ENCODE measurements at regions of chr11 and their contacts with region 1.

Region 1: GRCh38 chr11:34653826-34654490 is 33.1 kb downstream of the EHF start:
- DNase-seq: peak; percentile 89 to 100
- H3K4me3 ChIP-seq: peak overlapping the region; percentile 16; the same call in 1 of the 2 replicates
- H3K27ac ChIP-seq: peak overlapping the region; percentile 95
- H3K4me1 ChIP-seq: peaks cover 71% of the 10 kb centered on the region
- H3K27me3 ChIP-seq: no peaks in the 10 kb centered on the region
- CTCF ChIP-seq: peak; percentile 20; the same call in 1 of the 2 replicates

Region 2: GRCh38 chr11:34512840-34513681 is 140.9 kb before region 1 on chr11:
- CTCF ChIA-PET with region 1: no interaction called
- POLR2A ChIA-PET with region 1: no interaction called
- intact Hi-C with region 1: loop called (anchors 1 kb)
- DNase-seq: peak; percentile 58 to 73
- H3K4me3 ChIP-seq: peak overlapping the region; percentile 56
- H3K27ac ChIP-seq: peak overlapping the region; percentile 61
- H3K4me1 ChIP-seq: peaks cover 20% of the 10 kb centered on the region
- H3K27me3 ChIP-seq: no peaks in the 10 kb centered on the region
- CTCF ChIP-seq: peak; percentile 97

Region 3: GRCh38 chr11:34599406-34599901 is 54.5 kb before region 1 on chr11:
- CTCF ChIA-PET with region 1: interaction called, 3 read pairs
- POLR2A ChIA-PET with region 1: no interaction called
- intact Hi-C with region 1: loop called (anchors 1 kb)
- DNase-seq: peak; percentile 66 to 98
- H3K4me3 ChIP-seq: peak overlapping the region; percentile 24; the same call in 1 of the 2 replicates
- H3K27ac ChIP-seq: peak overlapping the region; percentile 91
- H3K4me1 ChIP-seq: peaks cover 45% of the 10 kb centered on the region
- H3K27me3 ChIP-seq: no peaks in the 10 kb centered on the region
- CTCF ChIP-seq: no peak

Region 4: DNA sequence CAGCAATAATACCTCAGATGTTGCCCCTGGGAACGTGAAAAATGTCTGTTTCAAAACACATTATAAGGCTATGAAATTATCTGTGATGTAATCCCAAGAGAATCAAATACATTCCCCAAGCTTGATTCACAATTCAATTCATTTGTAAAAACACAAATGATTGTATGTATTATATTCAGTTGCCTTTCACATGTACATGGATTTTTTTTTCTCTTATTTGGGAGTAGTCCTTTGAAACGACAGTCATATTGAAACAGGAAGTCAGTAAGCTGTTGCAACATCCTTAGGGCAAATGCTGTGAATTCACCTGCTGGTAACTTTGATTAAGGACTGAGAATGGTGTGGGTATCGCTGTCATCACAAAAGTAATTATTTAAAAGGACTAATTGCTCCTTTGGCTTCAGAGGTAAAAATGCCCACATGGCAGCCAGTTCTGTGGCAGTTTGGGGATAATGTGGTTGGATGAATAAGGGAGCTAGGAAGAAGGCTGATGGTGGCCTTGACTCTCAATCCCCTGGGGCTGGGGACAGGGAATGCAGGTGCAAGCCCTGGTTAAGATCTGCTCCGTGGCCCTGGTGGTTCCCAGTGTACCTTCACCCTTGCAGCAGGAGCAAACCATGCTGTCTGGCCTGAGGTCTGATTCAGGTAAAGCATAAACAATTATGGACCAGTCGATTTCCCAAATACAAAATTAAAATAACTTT is 19.8 kb before region 1 on chr11:
- CTCF ChIA-PET with region 1: interaction called, 16 read pairs
- POLR2A ChIA-PET with region 1: no interaction called
- intact Hi-C with region 1: no loop called
- DNase-seq: peak in 1 of 2 experiments; percentile 90
- H3K4me3 ChIP-seq: peak overlapping the region; percentile 45
- H3K27ac ChIP-seq: peak overlapping the region; percentile 91
- H3K4me1 ChIP-seq: peaks cover 100% of the 10 kb centered on the region
- H3K27me3 ChIP-seq: no peaks in the 10 kb centered on the region
- CTCF ChIP-seq: peak; percentile 41; the same call in 1 of the 2 replicates

Region 5: DNA sequence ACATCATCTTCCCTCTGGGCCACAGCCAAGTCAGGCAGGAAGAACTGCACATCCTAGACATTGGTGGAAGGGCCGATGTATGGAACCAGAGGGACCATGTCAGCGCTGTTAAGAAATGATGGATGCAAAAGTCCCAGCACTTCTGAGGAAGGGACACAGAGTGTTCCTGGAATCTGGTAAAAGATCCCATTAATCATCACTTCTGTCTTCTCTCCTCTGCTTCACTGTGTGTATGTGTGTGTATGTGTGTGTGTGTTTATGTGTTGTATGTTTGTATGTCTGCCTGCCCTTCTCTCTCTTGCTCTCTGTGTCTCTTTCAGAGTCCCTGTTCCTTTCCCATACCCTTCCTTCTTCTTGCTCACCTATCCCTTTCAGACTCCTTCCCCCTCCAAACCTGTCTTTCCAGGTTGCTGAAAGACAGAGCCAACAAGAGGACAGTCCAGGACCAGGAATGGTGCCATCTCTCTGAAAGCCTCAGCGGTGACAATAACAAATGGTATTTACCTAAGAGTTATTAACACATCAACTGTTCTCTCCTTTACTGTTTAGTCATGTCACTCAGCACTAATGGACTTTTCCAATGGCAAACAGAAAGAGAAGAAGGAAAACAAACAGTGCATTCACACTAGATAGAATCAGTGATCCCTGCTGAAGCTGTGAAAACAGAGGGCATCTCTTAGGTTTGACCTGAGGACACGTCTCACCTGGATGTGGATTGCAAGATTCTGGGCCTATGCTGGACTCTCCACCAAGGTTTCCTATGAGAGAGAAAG is 14.0 kb after region 1 on chr11:
- CTCF ChIA-PET with region 1: no interaction called
- POLR2A ChIA-PET with region 1: interaction called, 4 read pairs
- intact Hi-C with region 1: loop called (anchors 1 kb)
- DNase-seq: peak; percentile 78 to 99
- H3K4me3 ChIP-seq: no peak overlapping the region
- H3K27ac ChIP-seq: peak overlapping the region; percentile 85
- H3K4me1 ChIP-seq: peaks cover 50% of the 10 kb centered on the region
- H3K27me3 ChIP-seq: no peaks in the 10 kb centered on the region
- CTCF ChIP-seq: no peak

Region 6: GRCh38 chr11:34749666-34750659 is 96.0 kb after region 1 on chr11:
- CTCF ChIA-PET with region 1: no interaction called
- POLR2A ChIA-PET with region 1: interaction called, 3 read pairs
- intact Hi-C with region 1: loop called (anchors 1 kb)
- DNase-seq: peak; percentile 80 to 87
- H3K4me3 ChIP-seq: no peak overlapping the region
- H3K27ac ChIP-seq: peak overlapping the region; percentile 8; the same call in 1 of the 2 replicates
- H3K4me1 ChIP-seq: peaks cover 24% of the 10 kb centered on the region
- H3K27me3 ChIP-seq: no peaks in the 10 kb centered on the region
- CTCF ChIP-seq: no peak